Gastrocnemius medialis (tissue), 4 donors: ENCODE measurements at regions of chr20 and their contacts with region 1.

Region 1: DNA sequence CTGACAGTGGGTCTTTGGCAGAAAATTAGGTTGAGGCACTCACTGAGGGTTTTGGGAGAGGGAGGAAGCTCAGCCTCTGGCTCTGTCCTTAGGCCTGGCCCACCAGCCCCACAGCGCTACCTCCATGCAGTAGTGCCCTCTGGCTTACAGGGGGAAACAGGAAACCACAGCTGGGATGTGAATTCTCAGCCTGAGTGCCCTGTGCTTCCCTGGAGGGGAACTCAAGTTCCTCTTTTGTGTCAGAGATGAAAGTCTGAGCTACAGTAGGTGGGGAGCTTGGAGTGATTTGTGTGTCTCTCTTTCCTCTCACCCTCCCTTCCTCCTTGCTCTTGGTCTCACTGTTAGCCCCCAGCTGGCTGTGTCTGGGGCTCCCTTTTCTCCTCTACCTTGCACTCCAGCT is 48.2 kb upstream of the BLCAP start:
- DNase-seq: no peak
- ATAC-seq: no peak
- H3K4me3 ChIP-seq: no peak overlapping the region
- H3K27ac ChIP-seq: no peak overlapping the region
- H3K4me1 ChIP-seq: no peaks in the 10 kb centered on the region
- H3K27me3 ChIP-seq: peaks cover 0 to 3% (median 0%) of the 10 kb centered on the region in 3 donors
- CTCF ChIP-seq: no peak
- POLR2A ChIP-seq: no peak

Region 2: GRCh38 chr20:38196592-38196991 is 620.7 kb after region 1 on chr20:
- in situ Hi-C with region 1: loop called (anchors 25 kb)
- intact Hi-C with region 1: no loop called
- DNase-seq: peak; percentile 38 to 53
- ATAC-seq: peak; percentile 57 to 65
- H3K4me3 ChIP-seq: no peak overlapping the region
- H3K27ac ChIP-seq: peak overlapping the region in 1 of 4 donors; percentile 46
- H3K4me1 ChIP-seq: no peaks in the 10 kb centered on the region
- H3K27me3 ChIP-seq: no peaks in the 10 kb centered on the region
- CTCF ChIP-seq: no peak
- POLR2A ChIP-seq: no peak